Heart right ventricle (tissue), 16 donors: ENCODE measurements at regions of chrX and their contacts with region 1.

Region 1: DNA sequence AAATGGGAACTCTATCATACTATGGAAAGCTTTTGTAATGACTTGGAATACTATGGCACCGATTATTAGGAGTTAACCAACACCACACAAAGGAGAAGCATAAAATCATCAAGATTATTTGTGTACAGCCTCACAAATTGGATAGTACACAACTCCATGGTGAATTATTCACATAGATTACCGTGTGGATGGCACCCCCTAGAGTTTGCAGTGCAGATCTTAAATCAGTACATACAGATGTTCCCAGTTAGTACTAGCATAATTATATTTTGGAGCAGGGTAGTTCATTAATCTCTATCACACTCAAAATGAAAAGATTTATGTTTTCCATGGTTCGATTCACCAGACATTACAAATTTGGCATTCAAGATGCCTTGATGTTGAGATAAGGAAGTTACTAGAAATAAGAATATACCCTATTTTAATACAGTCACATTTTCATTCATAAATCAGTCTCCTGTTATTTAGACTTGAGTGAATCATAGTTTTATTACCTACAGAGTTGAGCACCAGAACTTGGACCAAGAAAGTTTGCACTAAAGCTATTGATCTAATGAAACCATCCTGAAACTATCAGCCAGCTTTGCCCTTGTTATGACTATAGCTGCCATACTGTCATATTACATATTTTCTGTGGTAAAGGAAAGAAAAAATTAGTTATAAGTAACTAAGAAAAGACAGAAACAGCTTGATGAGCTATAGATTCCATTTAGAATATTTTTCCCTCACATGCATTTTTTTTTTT is 531.8 kb downstream of the GLUD2 start:
- DNase-seq: peak in 1 of 2 donors; percentile 13
- ATAC-seq: no peak
- H3K4me3 ChIP-seq: no peak overlapping the region
- H3K27ac ChIP-seq: no peak overlapping the region
- H3K4me1 ChIP-seq: no peaks in the 10 kb centered on the region
- H3K27me3 ChIP-seq: no peaks in the 10 kb centered on the region
- CTCF ChIP-seq: peak in 7 of 9 donors; percentile 35 to 58 (median 41)

Region 2: DNA sequence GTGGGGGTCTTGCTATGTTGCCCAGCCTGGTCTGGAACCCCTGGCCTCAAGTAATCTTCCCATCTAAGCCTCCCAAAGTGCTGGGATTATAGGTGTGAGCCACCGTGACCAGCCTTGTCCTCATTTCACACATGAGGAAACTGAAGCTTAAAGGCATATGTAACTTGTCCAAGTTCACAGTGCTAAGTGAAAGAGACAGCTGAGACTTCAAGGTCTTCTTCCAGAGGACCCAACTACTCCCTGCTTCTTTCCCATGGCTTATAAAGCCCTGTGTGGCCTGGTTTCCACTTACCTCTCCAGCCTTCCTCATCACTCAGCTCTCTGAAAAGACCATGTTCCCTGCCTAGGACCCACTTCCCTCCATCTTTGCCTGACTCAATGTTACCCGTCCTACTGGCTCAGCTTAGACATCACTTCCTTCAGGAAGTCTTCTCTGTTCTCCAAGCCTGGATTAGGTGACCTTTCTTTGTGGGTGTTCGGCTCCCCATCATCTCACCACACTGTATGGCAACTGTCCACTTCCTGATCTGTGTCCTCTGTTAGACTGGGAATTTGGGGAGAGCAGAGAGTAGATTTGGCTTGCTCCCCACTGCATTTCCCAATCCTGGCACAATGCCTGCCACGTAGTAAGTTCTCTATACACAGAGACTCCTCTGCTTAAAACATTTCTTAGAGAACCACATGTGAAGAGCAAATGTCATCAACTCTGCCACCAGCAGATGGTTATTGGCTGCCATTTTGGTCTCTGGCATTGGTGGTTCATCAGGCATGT is 1079.7 kb before region 1 on chrX:
- intact Hi-C with region 1: loop called in 1 of 10 experiments (anchors 10 kb)
- DNase-seq: peak in 1 of 2 donors; percentile 11
- ATAC-seq: no peak
- H3K4me3 ChIP-seq: no peak overlapping the region
- H3K27ac ChIP-seq: no peak overlapping the region
- H3K4me1 ChIP-seq: peaks cover 0 to 3% (median 0%) of the 10 kb centered on the region in 9 donors
- H3K27me3 ChIP-seq: no peaks in the 10 kb centered on the region
- CTCF ChIP-seq: no peak

Region 3: DNA sequence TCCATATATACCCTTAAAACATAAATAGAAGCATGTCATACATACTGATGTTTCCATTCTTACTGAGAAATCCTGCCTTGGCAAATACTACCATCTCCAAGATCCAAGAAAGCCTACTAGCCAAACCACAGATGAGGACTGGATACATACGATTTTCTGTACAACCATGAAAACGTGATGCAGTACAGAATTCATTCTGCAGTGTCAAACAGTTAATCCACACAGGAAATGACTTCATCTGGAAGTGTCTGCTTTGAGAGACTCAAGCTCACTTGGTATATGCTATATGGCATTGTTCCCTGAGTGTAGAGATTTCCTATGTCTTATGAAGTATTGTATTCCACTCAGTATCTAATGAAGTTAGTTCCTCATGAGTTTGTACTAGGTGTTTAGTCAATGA is 797.8 kb before region 1 on chrX:
- intact Hi-C with region 1: loop called in 4 of 10 experiments (anchors 5 to 10 kb)
- DNase-seq: no peak
- ATAC-seq: no peak
- H3K4me3 ChIP-seq: no peak overlapping the region
- H3K27ac ChIP-seq: no peak overlapping the region
- H3K4me1 ChIP-seq: no peaks in the 10 kb centered on the region
- H3K27me3 ChIP-seq: peaks cover 0 to 17% (median 0%) of the 10 kb centered on the region in 7 donors
- CTCF ChIP-seq: no peak

Region 4: GRCh38 chrX:120790118-120790517 is 789.1 kb before region 1 on chrX:
- intact Hi-C with region 1: loop called in 8 of 10 experiments (anchors 2 to 10 kb)
- DNase-seq: peak in 1 of 2 donors; percentile 40
- ATAC-seq: peak in 7 of 8 donors; percentile 48 to 86 (median 61)
- H3K4me3 ChIP-seq: no peak overlapping the region
- H3K27ac ChIP-seq: peak overlapping the region in 4 of 10 donors; percentile 12 to 43 (median 14)
- H3K4me1 ChIP-seq: peaks cover 0 to 13% (median under 1%) of the 10 kb centered on the region in 9 donors
- H3K27me3 ChIP-seq: peaks cover 0 to 3% (median 0%) of the 10 kb centered on the region in 7 donors
- CTCF ChIP-seq: peak; percentile 47 to 90 (median 72)

Region 5: GRCh38 chrX:121308276-121308805 is 270.8 kb before region 1 on chrX:
- intact Hi-C with region 1: loop called in 2 of 10 experiments (anchors 10 kb)
- DNase-seq: peak in 1 of 2 donors; percentile 4
- ATAC-seq: peak in 6 of 8 donors; percentile 20 to 68 (median 63)
- H3K4me3 ChIP-seq: no peak overlapping the region
- H3K27ac ChIP-seq: peak overlapping the region in 1 of 10 donors; percentile 37
- H3K4me1 ChIP-seq: no peaks in the 10 kb centered on the region
- H3K27me3 ChIP-seq: no peaks in the 10 kb centered on the region
- CTCF ChIP-seq: peak in 7 of 9 donors; percentile 34 to 55 (median 44)

Region 6: GRCh38 chrX:121635141-121635540 is 56.0 kb after region 1 on chrX:
- intact Hi-C with region 1: no loop called
- DNase-seq: no peak
- ATAC-seq: no peak
- H3K4me3 ChIP-seq: no peak overlapping the region
- H3K27ac ChIP-seq: no peak overlapping the region
- H3K4me1 ChIP-seq: no peaks in the 10 kb centered on the region
- H3K27me3 ChIP-seq: no peaks in the 10 kb centered on the region
- CTCF ChIP-seq: no peak